G401 (cell line): ENCODE measurements at regions of chrX and their contacts with region 1.

Region 1: GRCh38 chrX:115560978-115561604 is at the start of gene PLS3:
- DNase-seq: peak; percentile 35
- total RNA-seq, gene PLS3: 88.5 and 108 TPM in 2 replicates

Region 2: DNA sequence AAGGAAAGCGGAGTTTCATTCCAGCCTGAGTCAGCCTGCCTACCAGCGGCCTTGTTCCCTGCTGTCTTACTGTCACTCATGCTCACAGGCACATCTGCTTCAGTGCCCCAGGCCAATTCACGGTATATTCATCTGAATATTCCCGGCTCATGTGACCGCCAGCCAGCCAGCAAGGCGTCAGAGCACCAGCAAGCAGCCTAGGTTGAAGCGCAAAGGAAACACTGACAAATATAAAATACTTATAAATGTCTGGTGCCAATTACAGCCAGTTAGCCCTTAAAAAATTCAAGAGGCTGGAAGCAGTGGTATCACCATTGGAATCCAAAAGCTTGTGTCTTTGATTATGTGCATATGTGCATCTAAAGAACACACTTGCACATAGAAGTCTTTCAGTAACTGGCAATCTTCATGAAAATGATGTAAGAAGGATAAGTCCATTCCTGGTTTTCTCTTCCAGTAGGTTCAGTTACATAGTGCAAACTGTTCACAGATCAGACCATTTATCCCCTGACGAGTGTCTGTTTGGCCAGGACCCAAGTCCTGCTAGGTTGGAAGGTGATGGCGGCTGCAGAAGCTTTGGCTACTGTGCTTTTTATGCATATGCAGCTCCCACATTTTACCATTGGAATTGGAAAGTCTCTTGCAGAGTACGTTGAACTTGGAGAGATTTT is 210.2 kb before region 1 on chrX:
- in situ Hi-C with region 1: no loop called
- DNase-seq: no peak

Region 3: DNA sequence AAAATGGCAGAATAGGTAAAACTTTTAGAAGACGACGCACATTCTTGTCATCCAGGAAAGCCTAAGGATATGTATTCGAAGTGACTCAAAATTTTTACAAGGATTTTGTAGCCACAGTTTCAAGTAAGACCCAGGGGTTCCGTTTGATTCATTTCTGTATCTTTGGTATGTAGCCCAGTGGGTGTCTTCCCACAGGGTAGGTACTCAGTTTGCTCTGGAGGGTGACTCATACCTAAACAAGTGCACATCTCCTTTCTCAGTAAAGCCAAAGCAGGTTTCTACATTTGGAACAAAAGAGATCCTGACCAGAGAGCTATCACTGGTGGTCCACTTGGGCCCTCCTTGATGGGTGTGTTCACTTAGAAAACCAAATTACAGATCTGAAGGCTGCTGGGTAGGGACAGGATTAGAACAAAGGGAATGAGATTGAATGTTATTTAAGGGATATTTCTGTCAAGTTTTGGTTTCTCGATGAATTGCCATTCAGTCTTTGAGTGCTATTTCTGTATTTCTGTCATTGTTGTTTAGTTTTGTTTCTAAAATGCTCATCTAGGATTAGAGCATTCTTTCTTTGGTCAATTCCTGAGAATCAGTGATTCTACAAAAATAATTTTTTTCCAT is 56.0 kb after region 1 on chrX:
- in situ Hi-C with region 1: loop called (anchors 10 kb)
- DNase-seq: no peak

Region 4: GRCh38 chrX:116232804-116233203 is 671.7 kb after region 1 on chrX:
- in situ Hi-C with region 1: no loop called
- DNase-seq: no peak